Activated T-helper 1 cell treated with anti-CD3 and anti-CD28 coated beads, Interleukin-12 subunit alpha, Interleukin-12 subunit beta, Interleukin-2, Interleukin-4 antibody, amounts not matched to agents 30 ng/mL and 10 ng/mL and 1 ng/mL, durations not matched to agents 14 hours and 24 hours and 36 hours (primary cell): ENCODE measurements at regions of chr2 and their contacts with region 1.

Region 1: GRCh38 chr2:20411361-20411894 is 35.4 kb upstream of the RHOB start:
- DNase-seq: peak; percentile 48
- H3K4me3 Mint-ChIP-seq: no peak overlapping the region
- H3K27ac Mint-ChIP-seq: no peak overlapping the region
- H3K4me1 Mint-ChIP-seq: peaks cover 6% of the 10 kb centered on the region
- H3K27me3 Mint-ChIP-seq: peaks cover 34% of the 10 kb centered on the region

Region 2: DNA sequence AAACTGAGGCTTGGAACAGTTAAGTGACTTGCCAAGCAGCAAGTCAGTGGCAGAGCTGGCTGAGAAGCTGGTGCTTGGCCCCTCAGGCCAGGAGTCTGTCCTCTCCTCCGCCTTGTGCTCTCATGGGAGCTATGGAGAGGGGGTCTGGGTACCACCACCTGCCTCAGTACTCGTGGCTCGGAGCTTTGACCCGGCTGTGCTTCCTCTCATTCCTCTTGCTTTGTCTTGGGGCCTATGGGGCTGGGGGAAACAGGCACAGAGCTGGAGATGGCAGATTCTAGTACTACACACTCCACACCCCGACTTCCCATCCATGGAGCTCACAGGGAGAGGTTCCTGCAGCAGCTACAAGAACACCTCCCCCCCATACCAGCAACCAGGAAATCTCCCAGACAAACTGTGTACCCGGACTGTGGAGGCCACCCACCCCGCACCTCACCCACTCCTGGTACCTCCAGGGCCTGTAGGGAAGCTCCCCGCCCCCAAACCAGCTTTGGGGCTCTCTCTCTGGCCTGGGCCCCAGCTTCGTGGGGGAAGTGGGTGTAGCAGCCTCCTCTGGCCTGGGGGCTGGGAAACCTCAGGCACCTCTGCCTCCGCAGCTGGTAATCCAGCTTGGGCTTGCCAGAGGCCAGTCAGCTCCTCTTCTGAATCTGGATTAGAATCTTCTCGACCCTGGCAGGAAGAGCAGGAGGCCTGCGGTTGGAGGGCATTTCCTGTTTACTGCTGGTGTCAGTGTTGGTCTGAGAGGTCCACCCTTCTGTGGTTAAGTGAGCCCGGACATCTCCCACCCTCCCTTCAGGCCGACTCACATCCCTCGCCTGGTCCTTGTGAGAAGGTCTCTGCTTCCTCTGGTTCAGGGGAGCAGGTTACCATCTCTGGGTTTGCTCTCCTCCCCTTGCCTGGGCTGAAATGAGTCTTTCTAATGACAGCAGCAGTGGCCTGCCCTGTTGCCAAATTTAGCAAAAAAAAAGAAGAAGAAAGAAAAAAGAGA is 13.2 kb after region 1 on chr2:
- intact Hi-C with region 1: loop called (anchors 1 kb)
- DNase-seq: no peak
- H3K4me3 Mint-ChIP-seq: peak overlapping the region; percentile 60
- H3K27ac Mint-ChIP-seq: peak overlapping the region; percentile 86
- H3K4me1 Mint-ChIP-seq: peaks cover 32% of the 10 kb centered on the region
- H3K27me3 Mint-ChIP-seq: no peaks in the 10 kb centered on the region

Region 3: DNA sequence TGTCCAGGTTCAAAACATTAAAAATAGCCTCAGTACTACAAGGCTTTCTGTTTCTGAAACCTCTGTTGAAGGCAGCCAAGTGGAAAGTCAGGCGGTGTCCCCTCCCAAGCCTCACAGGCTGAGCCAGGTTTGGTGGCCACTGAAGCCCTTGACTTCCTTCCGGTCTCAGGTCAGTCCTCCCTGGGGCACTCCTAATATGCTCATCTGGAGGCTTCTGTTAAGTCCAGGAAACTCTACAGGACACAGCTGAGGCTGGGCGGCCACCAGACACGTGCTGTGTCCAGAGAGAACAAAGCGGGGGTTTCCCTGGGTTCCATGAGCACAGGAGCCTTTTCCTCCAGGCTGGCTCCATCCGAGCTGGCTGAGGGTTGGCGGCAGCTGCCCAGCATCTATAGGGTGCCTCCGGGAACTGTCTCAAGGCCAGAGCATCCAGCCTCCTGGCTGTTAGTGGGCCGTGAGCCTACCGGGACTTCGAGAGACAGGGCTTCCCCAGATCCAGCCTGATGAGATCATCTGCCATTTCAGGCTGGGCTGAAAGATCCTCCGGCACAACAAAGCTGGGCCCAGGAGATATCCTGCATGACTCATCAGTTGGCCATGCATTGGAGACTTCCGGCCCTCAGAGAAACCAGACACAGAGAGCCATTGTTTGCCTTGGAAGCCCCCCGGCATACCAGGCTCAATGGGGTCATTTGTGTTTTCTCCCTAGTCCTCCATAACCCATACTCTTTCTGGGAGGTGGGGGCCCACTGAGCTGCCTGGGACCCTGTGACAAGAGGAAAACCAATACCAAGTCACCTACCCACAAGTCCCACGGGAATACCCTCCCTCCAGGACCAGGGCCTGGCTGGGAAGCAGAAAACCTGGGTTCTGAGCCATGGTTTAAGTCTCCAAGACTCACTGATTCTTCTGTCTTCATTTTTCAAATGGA is 167.7 kb after region 1 on chr2:
- intact Hi-C with region 1: no loop called
- DNase-seq: no peak
- H3K4me3 Mint-ChIP-seq: no peak overlapping the region
- H3K27ac Mint-ChIP-seq: no peak overlapping the region
- H3K4me1 Mint-ChIP-seq: peaks cover 27% of the 10 kb centered on the region
- H3K27me3 Mint-ChIP-seq: no peaks in the 10 kb centered on the region

Region 4: GRCh38 chr2:20635675-20636584 is 224.5 kb after region 1 on chr2:
- intact Hi-C with region 1: loop called (anchors 1 kb)
- DNase-seq: no peak
- H3K4me3 Mint-ChIP-seq: no peak overlapping the region
- H3K27ac Mint-ChIP-seq: no peak overlapping the region
- H3K4me1 Mint-ChIP-seq: no peaks in the 10 kb centered on the region
- H3K27me3 Mint-ChIP-seq: no peaks in the 10 kb centered on the region

Region 5: GRCh38 chr2:20642055-20642971 is 230.9 kb after region 1 on chr2:
- intact Hi-C with region 1: loop called (anchors 1 kb)
- DNase-seq: peak; percentile 62
- H3K4me3 Mint-ChIP-seq: no peak overlapping the region
- H3K27ac Mint-ChIP-seq: no peak overlapping the region
- H3K4me1 Mint-ChIP-seq: no peaks in the 10 kb centered on the region
- H3K27me3 Mint-ChIP-seq: no peaks in the 10 kb centered on the region

Region 6: GRCh38 chr2:20689428-20690264 is 278.2 kb after region 1 on chr2:
- intact Hi-C with region 1: no loop called
- DNase-seq: no peak
- H3K4me3 Mint-ChIP-seq: no peak overlapping the region
- H3K27ac Mint-ChIP-seq: no peak overlapping the region
- H3K4me1 Mint-ChIP-seq: no peaks in the 10 kb centered on the region
- H3K27me3 Mint-ChIP-seq: peaks cover 1% of the 10 kb centered on the region